K562 (cell line): ENCODE measurements at regions of chr19 and their contacts with region 1.

Region 1: DNA sequence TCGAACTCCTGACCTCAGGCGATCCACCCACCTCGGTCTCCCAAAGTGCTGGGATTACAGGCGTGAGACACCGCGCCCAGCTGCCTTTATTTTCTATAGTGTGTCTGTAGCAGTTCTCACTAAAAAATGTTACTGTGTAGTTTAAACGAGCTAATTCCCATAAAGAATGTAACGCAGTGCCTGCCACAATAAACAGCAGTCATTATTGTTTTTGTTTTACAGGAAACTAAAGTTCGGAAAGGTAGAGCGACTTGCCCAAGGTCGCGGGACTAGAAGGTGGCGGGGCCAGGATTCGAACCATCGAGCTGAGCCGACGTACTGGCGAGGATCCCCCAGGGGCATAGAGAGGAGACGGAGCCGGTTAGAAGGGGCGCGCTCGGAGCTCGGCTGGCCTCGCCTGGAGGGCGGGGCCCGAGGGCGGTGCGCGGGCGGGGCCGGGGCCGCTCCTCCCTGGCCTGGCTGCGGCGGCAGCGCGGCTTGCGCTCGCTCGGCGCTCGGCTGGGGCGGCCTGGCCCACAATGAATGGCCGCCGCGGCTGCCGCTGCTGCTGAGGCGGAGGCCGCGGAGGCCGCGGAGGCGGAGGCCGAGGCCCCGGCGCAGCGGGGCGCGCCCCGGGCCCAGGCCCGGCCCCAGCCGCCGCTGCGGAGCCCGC is at the start of gene NACC1:
- DNase-seq: peak; percentile 87 to 97 (median 92)
- ATAC-seq: peak; percentile 92
- H3K4me3 ChIP-seq: peak within 1 kb of the TSS; percentile 99
- H3K27ac ChIP-seq: peak within 1 kb of the TSS; percentile 95
- H3K4me1 ChIP-seq: peaks cover 21 to 50% of the 10 kb centered on the region in 2 experiments; a peak in 4 of 5 replicates
- H3K27me3 ChIP-seq: no peaks in the 10 kb centered on the region
- CTCF ChIP-seq: no peak
- EP300 ChIP-seq: peak; percentile 24; the same call in 1 of the 2 replicates
- POLR2A ChIP-seq: no peak; the same call in 1 of the 2 replicates
- RAD21 ChIP-seq: 0 out of 4 replicates have a peak, but pooled peaks of 1 of the 2 experiments have one; percentile 9
- polyA plus RNA-seq, gene NACC1: 0.04 to 0.17 TPM

Region 2: DNA sequence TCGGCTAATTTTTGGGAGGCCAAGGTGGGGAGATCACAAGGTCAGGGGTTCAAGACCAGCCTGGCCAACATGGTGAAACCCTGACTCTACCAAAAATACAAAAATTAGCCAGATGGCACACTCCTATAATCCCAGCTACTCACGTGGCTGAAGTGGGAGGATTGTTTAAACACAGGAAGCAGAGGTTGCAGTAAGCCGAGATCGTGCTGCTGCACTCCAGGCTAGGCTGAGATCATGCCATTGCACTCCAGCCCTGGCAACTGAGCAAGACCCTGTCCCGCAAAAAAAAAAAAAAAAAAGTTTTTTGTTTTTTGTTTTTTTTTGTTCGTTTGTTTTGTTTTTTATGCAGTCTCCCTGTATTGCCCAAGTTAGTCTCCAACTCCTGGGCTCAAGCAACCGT is 258.4 kb before region 1 on chr19:
- CTCF ChIA-PET with region 1: no interaction called
- POLR2A ChIA-PET with region 1: no interaction called
- in situ Hi-C with region 1: no loop called
- intact Hi-C with region 1: no loop called
- DNase-seq: no peak
- ATAC-seq: no peak
- H3K4me3 ChIP-seq: no peak overlapping the region
- H3K27ac ChIP-seq: no peak overlapping the region
- H3K4me1 ChIP-seq: peaks cover 0 to 5% of the 10 kb centered on the region in 2 experiments; a peak in 1 of 5 replicates
- H3K27me3 ChIP-seq: no peaks in the 10 kb centered on the region
- CTCF ChIP-seq: no peak
- EP300 ChIP-seq: no peak
- POLR2A ChIP-seq: no peak
- RAD21 ChIP-seq: no peak

Region 3: DNA sequence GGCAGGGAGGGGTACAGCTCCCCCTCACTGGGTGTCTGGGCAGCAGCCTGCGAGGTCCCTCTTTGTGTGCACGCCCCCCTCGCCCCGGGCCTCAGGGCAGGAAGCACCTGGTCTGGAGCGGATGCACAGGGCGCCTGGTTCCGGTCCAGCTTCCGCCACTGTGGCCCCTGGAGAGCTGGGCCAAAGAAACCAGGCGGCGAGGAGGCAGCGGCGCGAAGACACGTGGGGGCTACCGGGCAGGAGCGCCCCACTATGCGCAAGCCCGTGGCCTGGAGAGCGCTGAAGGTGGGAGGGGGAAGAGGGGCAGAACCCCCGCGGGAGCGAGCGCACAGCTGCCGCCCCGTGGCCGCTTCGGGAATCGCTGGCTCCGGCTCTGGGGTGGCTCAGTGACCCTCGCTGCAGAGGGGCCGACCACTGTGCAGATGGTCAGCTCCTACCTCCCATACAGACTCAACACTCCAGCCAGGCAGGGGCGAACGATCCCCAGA is 13.5 kb before region 1 on chr19:
- CTCF ChIA-PET with region 1: interaction called, 3 read pairs
- POLR2A ChIA-PET with region 1: interaction called, 8 read pairs
- in situ Hi-C with region 1: no loop called
- intact Hi-C with region 1: loop called (anchors 2 kb)
- DNase-seq: peak; percentile 67 to 82 (median 76)
- ATAC-seq: peak; percentile 44
- H3K4me3 ChIP-seq: no peak overlapping the region
- H3K27ac ChIP-seq: peak overlapping the region; percentile 98
- H3K4me1 ChIP-seq: peaks cover 16 to 48% of the 10 kb centered on the region in 2 experiments
- H3K27me3 ChIP-seq: no peaks in the 10 kb centered on the region
- CTCF ChIP-seq: peak; percentile 81 to 95 (median 84)
- EP300 ChIP-seq: no peak
- POLR2A ChIP-seq: peak; percentile 62
- RAD21 ChIP-seq: peak; percentile 61 to 74

Region 4: GRCh38 chr19:13132471-13133180 is 14.7 kb after region 1 on chr19:
- CTCF ChIA-PET with region 1: no interaction called
- POLR2A ChIA-PET with region 1: interaction called, 13 read pairs
- in situ Hi-C with region 1: no loop called
- intact Hi-C with region 1: no loop called
- DNase-seq: no peak
- ATAC-seq: peak; percentile 17; the same call in 1 of the 3 replicates
- H3K4me3 ChIP-seq: no peak overlapping the region
- H3K27ac ChIP-seq: peak overlapping the region; percentile 41; the same call in 1 of the 3 replicates
- H3K4me1 ChIP-seq: peaks cover 16 to 28% of the 10 kb centered on the region in 2 experiments
- H3K27me3 ChIP-seq: no peaks in the 10 kb centered on the region
- CTCF ChIP-seq: no peak
- EP300 ChIP-seq: no peak
- POLR2A ChIP-seq: no peak
- RAD21 ChIP-seq: no peak